Right ventricle myocardium superior (tissue), 1 donor: ENCODE measurements at regions of chr5 and their contacts with region 1.

Region 1: DNA sequence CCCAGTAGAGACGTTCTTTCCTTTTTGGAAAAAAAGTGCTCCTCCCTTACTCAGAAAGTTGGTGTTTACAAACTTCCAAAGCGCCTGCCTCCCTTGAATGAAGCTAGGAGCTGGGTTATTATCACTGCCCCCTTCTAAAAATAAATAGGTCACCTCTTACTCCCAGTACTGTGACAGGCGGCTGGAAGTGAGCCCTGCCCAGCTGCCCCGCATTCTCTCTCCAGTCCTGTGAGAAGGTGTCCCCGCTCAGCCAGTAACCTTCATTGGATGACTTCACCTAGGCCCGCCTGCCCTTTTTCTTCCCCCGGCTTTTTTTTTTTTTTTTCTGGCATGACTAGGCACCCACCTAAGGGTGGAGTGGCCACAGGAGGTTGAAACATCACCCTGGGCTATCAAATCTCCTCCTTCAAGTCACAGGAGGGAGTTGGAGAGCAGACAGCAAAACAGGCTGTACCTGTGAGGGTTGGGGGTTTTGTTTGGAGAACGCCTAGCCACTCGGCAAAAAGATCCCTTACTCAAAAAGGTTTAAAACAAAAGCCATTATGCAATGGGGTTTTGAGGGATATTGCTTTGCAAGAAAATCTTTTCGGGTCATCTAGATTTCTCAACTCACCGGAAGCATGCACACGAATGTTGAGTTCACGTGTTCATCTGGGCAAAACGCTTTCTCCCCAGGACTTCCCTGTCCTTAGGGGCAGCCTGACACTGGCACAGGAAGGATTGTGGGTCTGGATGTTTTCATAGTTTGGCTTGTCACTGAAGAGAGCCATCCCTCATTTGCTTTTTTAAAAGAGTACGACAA is 43.3 kb upstream of the ZNF622 start:
- DNase-seq: peak; percentile 86
- ATAC-seq: peak; percentile 87

Region 2: GRCh38 chr5:16540421-16540820 is 31.5 kb after region 1 on chr5:
- intact Hi-C with region 1: loop called (anchors 5 kb)
- DNase-seq: no peak
- ATAC-seq: no peak

Region 3: GRCh38 chr5:16759147-16759773 is 250.3 kb after region 1 on chr5:
- intact Hi-C with region 1: no loop called
- DNase-seq: no peak
- ATAC-seq: no peak

Region 4: DNA sequence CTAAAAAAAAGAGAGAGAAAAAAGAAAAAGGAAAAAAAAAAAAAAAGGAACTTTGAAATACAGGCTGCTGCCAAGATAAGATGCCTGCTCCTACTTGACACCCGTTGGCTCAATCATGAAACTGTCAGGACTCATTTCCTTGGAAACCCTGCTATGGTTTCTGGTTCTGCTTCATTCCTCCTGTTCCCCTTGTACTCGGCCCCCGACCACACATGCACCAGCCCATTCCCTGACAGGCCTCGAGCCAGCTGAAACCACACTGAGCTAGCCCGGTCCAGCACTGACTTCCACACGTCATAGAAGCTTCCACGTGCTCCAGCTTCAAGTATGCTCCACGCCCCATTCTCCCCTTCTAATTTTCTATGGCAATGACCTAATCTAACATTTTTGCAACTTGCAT is 334.0 kb after region 1 on chr5:
- intact Hi-C with region 1: no loop called
- DNase-seq: no peak
- ATAC-seq: no peak